ENCODE measurements at regions of chr20 and their contacts with region 1.

Region 1: DNA sequence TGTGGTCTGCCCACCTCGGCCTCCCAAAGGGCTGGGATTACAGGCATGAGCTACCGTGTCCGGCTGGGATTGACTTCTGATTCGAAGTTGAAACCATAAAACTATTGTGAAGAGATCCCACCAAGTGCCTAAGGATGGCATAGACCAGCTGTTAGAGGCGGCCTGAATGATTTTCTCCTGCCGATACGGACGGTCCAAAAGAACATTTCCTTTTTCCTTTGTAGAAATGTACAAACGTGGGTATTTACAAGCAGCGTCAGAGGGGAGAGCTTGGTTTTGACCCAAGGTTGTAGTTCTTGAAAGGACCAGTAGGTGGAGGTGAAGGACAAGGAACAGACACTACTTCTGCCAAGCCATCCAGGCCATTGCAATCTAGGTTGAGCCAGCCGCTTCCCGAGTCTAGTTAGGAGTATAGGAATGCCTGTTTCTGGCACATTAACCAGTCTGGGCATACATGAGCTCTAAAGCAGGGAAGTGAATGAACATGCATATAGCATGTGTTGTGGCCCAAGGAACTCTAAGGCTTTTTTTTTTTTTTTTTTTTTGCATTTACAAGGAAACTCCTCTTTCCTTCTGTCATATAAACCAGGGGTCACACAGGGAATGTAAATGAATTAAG is 29.1 kb downstream of the MOCS3 start:
- DNase-seq: peak; percentile 60
- H3K4me3 ChIP-seq: no peak overlapping the region
- CTCF ChIP-seq: peak; percentile 79

Region 2: GRCh38 chr20:51311606-51312495 is 324.1 kb after region 1 on chr20:
- CTCF ChIA-PET with region 1: interaction called, 626 read pairs
- POLR2A ChIA-PET with region 1: no interaction called
- DNase-seq: no peak
- H3K4me3 ChIP-seq: no peak overlapping the region
- CTCF ChIP-seq: no peak

Region 3: DNA sequence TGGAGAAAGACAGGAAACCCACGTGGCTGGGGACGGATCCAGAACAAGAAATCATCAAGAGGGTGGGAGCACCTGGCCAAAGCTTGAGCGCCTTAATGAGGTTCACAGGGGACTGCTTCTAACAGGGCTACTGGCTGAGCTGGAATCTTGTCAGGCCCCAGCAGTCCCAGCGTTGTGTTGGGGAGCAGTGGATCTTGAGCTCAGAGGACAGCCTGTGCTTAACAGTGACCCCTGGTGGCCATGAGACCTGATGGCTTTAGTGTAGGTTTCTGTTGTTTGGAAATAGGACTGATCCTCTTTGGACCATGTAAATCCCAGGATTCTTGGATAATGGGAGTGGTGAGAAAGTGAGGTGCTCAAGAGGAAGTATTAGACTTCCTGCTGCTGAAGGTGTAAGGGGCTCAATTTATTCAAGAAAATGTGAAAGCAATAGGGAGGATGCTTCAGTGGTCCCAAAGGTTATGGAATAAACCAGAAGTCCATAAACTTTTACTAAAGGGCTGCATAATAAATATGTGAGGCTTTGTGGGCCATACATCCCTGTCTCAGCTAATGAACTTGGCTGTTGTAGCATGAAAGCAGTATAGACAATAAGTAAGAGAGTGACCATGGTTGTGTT is 338.6 kb after region 1 on chr20:
- CTCF ChIA-PET with region 1: interaction called, 161 read pairs
- POLR2A ChIA-PET with region 1: no interaction called
- DNase-seq: no peak
- H3K4me3 ChIP-seq: no peak overlapping the region
- CTCF ChIP-seq: no peak

Region 4: DNA sequence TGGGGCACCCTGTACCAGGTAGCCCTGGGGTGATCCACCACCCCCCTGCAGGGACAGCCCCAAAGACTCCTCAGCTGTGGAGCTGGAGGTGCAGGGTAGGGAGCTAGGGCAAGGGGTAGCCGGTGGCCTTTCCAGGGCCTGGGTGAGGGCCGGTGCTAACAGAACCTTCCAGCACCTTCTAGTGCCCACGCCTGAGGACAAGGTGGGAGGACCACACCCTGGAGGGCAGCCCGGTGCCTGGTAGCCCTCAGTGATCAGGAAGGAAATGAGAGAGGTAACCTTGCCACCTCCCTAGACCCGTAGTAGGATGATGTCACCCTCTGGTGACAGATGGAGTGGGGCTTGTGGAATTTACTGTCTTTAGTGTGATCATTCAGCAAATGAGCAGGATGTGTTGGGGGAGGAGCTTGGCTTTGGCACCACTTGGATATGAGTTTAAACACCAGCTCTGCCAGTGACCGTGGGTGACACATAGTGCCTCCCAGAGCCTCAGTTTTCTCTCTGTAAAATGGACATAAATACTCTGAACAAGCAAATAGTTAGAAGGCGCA is 367.1 kb after region 1 on chr20:
- CTCF ChIA-PET with region 1: interaction called, 32 read pairs
- POLR2A ChIA-PET with region 1: no interaction called
- DNase-seq: no peak
- H3K4me3 ChIP-seq: no peak overlapping the region
- CTCF ChIP-seq: no peak

Region 5: DNA sequence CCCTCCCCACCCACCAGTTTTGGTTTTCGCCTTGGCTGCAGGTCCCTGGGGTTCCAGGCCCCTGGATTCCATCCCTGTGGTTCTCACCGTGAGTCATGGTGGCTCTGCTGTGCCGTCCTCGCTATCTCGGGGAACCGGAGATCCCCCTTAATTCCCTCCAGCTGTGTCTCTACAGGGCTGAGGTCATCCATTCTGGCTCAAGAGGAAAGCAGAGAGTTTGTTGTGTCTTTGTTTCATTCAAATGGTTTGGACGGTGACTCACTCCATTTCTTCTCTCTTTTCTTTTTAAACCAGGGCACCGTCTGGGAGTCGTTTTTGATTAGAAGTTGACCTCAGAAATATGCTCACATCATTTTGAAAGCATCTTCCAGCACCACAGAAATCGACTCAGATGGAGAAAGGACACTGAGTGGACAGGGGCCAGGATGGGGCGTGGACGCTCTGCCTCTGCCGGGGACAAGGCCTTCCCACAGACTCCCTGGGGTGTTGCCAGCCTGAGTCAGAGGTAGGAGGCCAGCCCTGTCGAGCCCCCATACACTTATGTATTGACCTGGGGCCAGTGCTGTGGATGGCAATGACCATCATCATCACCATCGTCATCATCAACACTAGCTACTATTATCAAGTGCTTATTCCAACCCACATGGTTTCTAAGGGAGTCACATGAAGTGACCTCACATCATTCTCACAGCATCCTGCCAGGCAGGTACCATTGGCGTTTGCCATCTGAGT is 378.6 kb after region 1 on chr20:
- CTCF ChIA-PET with region 1: interaction called, 31 read pairs
- POLR2A ChIA-PET with region 1: interaction called, 6 read pairs
- DNase-seq: peak; percentile 100
- H3K4me3 ChIP-seq: no peak overlapping the region
- CTCF ChIP-seq: no peak

Region 6: GRCh38 chr20:51624157-51624731 is 636.5 kb after region 1 on chr20:
- CTCF ChIA-PET with region 1: interaction called, 122 read pairs
- POLR2A ChIA-PET with region 1: no interaction called
- DNase-seq: no peak
- H3K4me3 ChIP-seq: no peak overlapping the region
- CTCF ChIP-seq: peak; percentile 73